Activated B cell treated with CpG ODN at 0.5 μM for 24 hours (primary cell): ENCODE measurements at regions of chr1 and their contacts with region 1.

Region 1: DNA sequence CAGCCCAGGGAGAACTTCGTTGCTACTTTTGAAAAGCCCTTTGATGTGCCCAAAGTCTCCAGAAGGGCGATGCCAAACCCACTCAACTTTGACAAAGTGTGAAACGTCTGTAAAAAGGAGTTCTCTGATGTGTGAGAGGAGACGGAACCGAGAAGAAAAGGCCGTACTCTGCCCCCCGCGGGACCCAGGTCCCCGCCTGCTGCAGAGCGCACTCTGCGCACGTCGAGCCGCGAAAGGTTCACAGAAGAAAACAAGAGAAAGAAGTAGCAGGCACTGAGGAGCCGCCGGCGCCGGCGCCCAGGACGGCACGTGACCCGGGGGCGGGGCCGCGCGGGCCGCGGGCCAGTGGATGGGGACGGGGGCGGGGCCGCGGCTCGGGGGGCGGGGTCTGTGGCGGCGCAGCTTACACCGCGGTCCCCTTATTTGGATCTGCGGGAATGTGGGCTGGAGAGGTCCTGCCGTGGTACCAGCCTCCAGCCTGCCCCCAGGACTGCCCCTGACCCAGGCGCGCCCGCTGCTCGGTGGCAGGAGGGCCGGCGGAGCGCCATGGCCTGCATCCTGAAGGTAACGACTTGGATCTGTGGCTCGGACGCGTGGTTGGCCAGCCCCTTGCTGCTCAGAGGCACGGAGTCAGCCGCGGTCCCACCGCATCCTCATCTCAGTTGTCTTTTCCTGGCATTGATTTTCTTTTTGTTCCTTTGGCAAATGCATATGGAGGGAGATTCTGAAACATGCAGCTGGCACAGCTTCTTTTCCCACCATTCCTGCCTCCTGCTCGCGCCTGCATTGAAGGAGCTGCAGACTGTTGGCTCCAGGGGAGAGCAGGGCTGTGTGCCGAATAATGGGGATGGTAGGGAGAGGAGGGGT is at the start of gene ST6GALNAC3:
- DNase-seq: peak; percentile 72
- ATAC-seq: peak; percentile 86
- H3K4me3 Mint-ChIP-seq: peak within 1 kb of the TSS; percentile 88
- H3K27ac Mint-ChIP-seq: peak within 1 kb of the TSS; percentile 81
- H3K4me1 Mint-ChIP-seq: peaks cover 35% of the 10 kb centered on the region
- H3K27me3 Mint-ChIP-seq: peaks cover 9% of the 10 kb centered on the region
- CTCF ChIP-seq: no peak
- total RNA-seq, gene ST6GALNAC3: 9.1 and 12.6 TPM in 2 replicates

Region 2: GRCh38 chr1:75724472-75725022 is 350.0 kb before region 1 on chr1 and contains the start of gene ACADM:
- CTCF ChIA-PET with region 1: no interaction called
- POLR2A ChIA-PET with region 1: no interaction called
- intact Hi-C with region 1: loop called (anchors 1 kb)
- DNase-seq: peak; percentile 90
- ATAC-seq: peak; percentile 92
- H3K4me3 Mint-ChIP-seq: peak within 1 kb of the TSS; percentile 100
- H3K27ac Mint-ChIP-seq: peak within 1 kb of the TSS; percentile 94
- H3K4me1 Mint-ChIP-seq: peaks cover 43% of the 10 kb centered on the region
- H3K27me3 Mint-ChIP-seq: no peaks in the 10 kb centered on the region
- CTCF ChIP-seq: no peak
- total RNA-seq, gene ACADM: 49.4 and 49.9 TPM in 2 replicates

Region 3: DNA sequence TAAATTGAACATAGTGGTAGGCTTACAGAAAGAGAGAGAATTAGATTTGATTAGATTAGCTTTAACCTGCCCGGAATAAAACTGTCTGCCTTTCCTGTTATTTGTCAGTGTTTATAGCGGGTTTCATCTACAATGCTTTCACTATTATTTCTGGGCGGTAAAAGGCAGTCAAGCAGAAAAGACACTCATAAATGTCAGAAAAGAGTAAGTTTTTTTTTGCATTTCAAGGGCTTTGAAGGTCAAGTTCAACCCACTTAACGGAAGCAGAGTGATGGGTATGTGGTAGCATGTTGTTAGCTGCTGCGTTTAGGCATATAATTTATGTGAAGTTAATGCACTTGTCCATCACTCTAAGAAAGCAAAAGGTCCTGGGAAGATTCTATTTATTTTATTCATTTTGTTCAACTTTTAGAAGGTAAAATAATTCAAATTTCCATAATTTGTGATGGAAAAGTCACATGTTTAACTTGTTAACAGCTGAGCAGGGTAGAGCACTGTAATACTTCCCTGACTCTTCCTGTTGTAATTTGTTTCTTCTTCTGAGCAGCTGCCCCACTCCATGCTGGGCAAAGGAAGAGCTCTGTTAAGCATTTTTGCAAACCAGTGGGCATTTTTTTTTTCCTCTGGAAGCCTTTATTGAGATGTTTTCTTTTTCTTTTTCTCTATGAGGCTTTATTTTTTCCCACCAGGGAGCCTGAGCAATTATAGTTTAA is 220.1 kb after region 1 on chr1:
- CTCF ChIA-PET with region 1: no interaction called
- POLR2A ChIA-PET with region 1: no interaction called
- intact Hi-C with region 1: loop called (anchors 10 kb)
- DNase-seq: no peak
- ATAC-seq: peak; percentile 85
- H3K4me3 Mint-ChIP-seq: peak overlapping the region; percentile 29
- H3K27ac Mint-ChIP-seq: peak overlapping the region; percentile 37
- H3K4me1 Mint-ChIP-seq: peaks cover 48% of the 10 kb centered on the region
- H3K27me3 Mint-ChIP-seq: no peaks in the 10 kb centered on the region
- CTCF ChIP-seq: no peak

Region 4: DNA sequence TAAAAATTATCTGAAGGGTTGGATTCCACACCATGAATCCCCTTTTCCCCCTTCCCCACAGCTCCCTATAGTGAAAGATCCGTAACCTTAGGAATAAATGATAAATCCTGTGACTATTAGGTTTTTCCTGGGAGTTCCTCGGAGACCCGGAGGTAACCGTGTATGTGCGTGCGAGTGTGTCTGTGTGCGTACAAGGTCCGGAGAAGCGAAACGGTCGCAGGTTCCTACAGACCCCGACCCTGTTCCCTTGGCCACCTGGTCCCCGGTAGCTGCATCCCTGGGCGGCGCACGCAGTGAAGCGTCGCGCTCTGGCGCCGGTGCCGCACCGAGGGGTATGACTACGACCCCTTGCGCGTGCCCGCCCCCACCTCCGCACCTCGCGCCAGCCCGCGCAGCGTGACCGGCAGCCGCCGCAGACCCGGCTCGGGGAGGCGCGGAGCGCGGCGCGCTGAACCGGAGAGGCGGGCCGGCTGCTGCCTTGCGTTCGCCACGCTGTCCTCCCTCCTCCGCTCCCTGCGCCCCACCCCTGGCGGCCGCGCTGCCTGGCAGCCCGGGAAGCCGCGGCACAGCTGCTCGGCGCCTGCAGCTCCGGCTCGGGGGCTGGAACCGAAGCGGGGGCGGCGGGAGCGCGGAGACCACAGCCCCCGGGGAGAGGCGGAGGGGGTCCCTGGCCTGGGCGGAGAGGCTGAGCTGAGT is 1207.1 kb after region 1 on chr1 and contains the start of gene AK5:
- CTCF ChIA-PET with region 1: no interaction called
- POLR2A ChIA-PET with region 1: no interaction called
- intact Hi-C with region 1: loop called (anchors 10 kb)
- DNase-seq: peak; percentile 18
- ATAC-seq: peak; percentile 64
- H3K4me3 Mint-ChIP-seq: peak within 1 kb of the TSS; percentile 44
- H3K27ac Mint-ChIP-seq: no peak within 1 kb of the TSS
- H3K4me1 Mint-ChIP-seq: peaks cover 34% of the 10 kb centered on the region
- H3K27me3 Mint-ChIP-seq: peaks cover 40% of the 10 kb centered on the region
- CTCF ChIP-seq: no peak
- total RNA-seq, gene AK5: not detected in 2 replicates